ENCODE measurements at regions of chr5 and their contacts with region 1.

Region 1: GRCh38 chr5:92969781-92970237 is 611.2 kb downstream of the NR2F1-AS1 start:
- DNase-seq: peak; percentile 98
- ATAC-seq: peak; percentile 99
- H3K4me3 ChIP-seq: no peak overlapping the region
- H3K27ac ChIP-seq: peak overlapping the region; percentile 87
- H3K4me1 ChIP-seq: peaks cover 59% of the 10 kb centered on the region
- H3K27me3 ChIP-seq: no peaks in the 10 kb centered on the region
- CTCF ChIP-seq: no peak
- EP300 ChIP-seq: peak; percentile 74 to 99
- POLR2A ChIP-seq: 0 out of 4 replicates have a peak, but pooled peaks of 1 of the 2 experiments have one; percentile 22
- RAD21 ChIP-seq: no peak

Region 2: GRCh38 chr5:92909602-92909962 is 60.2 kb before region 1 on chr5:
- CTCF ChIA-PET with region 1: no interaction called
- POLR2A ChIA-PET with region 1: interaction called, 19 read pairs
- in situ Hi-C with region 1: no loop called
- intact Hi-C with region 1: no loop called
- DNase-seq: peak; percentile 41
- ATAC-seq: peak; percentile 79
- H3K4me3 ChIP-seq: no peak overlapping the region
- H3K27ac ChIP-seq: peak overlapping the region; percentile 39
- H3K4me1 ChIP-seq: peaks cover 72% of the 10 kb centered on the region
- H3K27me3 ChIP-seq: no peaks in the 10 kb centered on the region
- CTCF ChIP-seq: peak; percentile 64
- EP300 ChIP-seq: 0 out of 4 replicates have a peak, but pooled peaks of 1 of the 2 experiments have one; percentile 12
- POLR2A ChIP-seq: no peak
- RAD21 ChIP-seq: peak; percentile 77

Region 3: GRCh38 chr5:93078082-93079038 is 108.6 kb after region 1 on chr5:
- CTCF ChIA-PET with region 1: no interaction called
- POLR2A ChIA-PET with region 1: no interaction called
- in situ Hi-C with region 1: no loop called
- intact Hi-C with region 1: loop called (anchors 1 kb)
- DNase-seq: peak; percentile 98
- ATAC-seq: peak; percentile 99
- H3K4me3 ChIP-seq: peak overlapping the region in 1 of 3 experiments; percentile 13; a peak in 1 of 6 replicates
- H3K27ac ChIP-seq: peak overlapping the region; percentile 76
- H3K4me1 ChIP-seq: peaks cover 37% of the 10 kb centered on the region
- H3K27me3 ChIP-seq: no peaks in the 10 kb centered on the region
- CTCF ChIP-seq: peak; percentile 28; the same call in 1 of the 2 replicates
- EP300 ChIP-seq: peak; percentile 68 to 85; a peak in 2 of 4 replicates
- POLR2A ChIP-seq: peak in 1 of 2 experiments; percentile 60; a peak in 2 of 4 replicates
- RAD21 ChIP-seq: no peak; the same call in 1 of the 2 replicates

Measured in HepG2 (cell line).